CD8-positive, alpha-beta T cell (primary cell): ENCODE measurements at regions of chr12 and their contacts with region 1.

Region 1: DNA sequence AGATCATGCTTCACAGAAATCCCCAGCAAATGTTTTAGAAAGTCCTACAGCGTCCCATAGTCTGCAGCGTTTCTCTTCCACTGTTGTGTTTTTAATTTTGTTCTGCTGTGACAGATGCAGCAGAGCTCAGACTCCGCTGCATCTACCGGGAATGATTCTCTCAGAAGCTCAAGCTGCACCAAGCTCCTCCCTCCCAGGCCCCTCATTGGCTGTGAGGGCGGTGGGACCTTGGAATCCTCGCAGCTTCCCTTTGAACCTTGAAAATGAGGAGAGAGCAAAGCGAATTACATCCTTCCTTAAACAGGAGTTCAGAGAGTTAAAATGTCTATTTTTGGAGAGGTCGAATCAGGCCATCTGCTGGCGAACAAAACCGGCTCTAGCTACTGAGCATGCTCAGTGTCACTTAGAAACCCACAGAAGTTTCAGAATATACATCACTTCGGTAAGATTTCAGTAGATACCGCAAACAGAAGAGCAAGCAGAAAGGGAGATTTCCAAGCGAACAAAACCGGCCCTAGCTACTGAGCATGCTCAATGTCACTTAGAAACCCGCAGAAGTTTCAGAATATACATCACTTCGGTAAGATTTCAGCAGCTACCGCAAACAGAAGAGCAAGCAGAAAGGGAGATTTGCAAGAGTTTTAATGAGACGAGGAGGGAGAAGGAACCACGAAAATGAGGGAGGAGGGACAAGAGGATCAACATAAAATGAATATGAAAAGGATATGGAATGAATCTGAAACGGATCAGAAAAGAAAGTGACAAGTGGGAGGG is at the start of gene ABCD2:
- DNase-seq: peak; percentile 41 to 95 (median 73)
- ATAC-seq: peak; percentile 80
- H3K4me3 ChIP-seq: peak within 1 kb of the TSS; percentile 62 to 73
- H3K4me3 Mint-ChIP-seq: no peak within 1 kb of the TSS
- H3K27ac ChIP-seq: peak within 1 kb of the TSS; percentile 71 to 81
- H3K27ac Mint-ChIP-seq: no peak within 1 kb of the TSS
- H3K4me1 ChIP-seq: peaks cover 33% of the 10 kb centered on the region
- H3K4me1 Mint-ChIP-seq: peaks cover 42% of the 10 kb centered on the region
- H3K27me3 ChIP-seq: no peaks in the 10 kb centered on the region
- H3K27me3 Mint-ChIP-seq: no peaks in the 10 kb centered on the region
- CTCF ChIP-seq: peak; percentile 17
- total RNA-seq, gene ABCD2: 3.4 to 3.5 TPM

Region 2: GRCh38 chr12:38316391-38317129 is 1303.3 kb before region 1 on chr12 and contains the start of gene ALG10B:
- CTCF ChIA-PET with region 1: no interaction called
- POLR2A ChIA-PET with region 1: no interaction called
- intact Hi-C with region 1: loop called in 1 of 2 experiments (anchors 5 kb)
- DNase-seq: peak; percentile 85 to 97 (median 91)
- ATAC-seq: peak; percentile 95
- H3K4me3 ChIP-seq: peak within 1 kb of the TSS; percentile 69 to 74
- H3K4me3 Mint-ChIP-seq: peak within 1 kb of the TSS; percentile 88
- H3K27ac ChIP-seq: peak within 1 kb of the TSS; percentile 85 to 92
- H3K27ac Mint-ChIP-seq: peak within 1 kb of the TSS; percentile 97
- H3K4me1 ChIP-seq: peaks cover 26% of the 10 kb centered on the region
- H3K4me1 Mint-ChIP-seq: peaks cover 27% of the 10 kb centered on the region
- H3K27me3 ChIP-seq: no peaks in the 10 kb centered on the region
- H3K27me3 Mint-ChIP-seq: no peaks in the 10 kb centered on the region
- CTCF ChIP-seq: peak; percentile 70
- total RNA-seq, gene ALG10B: 7.2 to 10.3 TPM

Region 3: GRCh38 chr12:39587225-39587624 is 32.6 kb before region 1 on chr12:
- CTCF ChIA-PET with region 1: interaction called, 8 read pairs
- POLR2A ChIA-PET with region 1: interaction called, 3 read pairs
- intact Hi-C with region 1: loop called in 1 of 2 experiments (anchors 2 kb)
- DNase-seq: peak in 5 of 9 experiments; percentile 1 to 67 (median 19)
- ATAC-seq: peak; percentile 75
- H3K4me3 ChIP-seq: no peak overlapping the region
- H3K4me3 Mint-ChIP-seq: no peak overlapping the region
- H3K27ac ChIP-seq: no peak overlapping the region
- H3K27ac Mint-ChIP-seq: no peak overlapping the region
- H3K4me1 ChIP-seq: no peaks in the 10 kb centered on the region
- H3K4me1 Mint-ChIP-seq: peaks cover 14% of the 10 kb centered on the region
- H3K27me3 ChIP-seq: no peaks in the 10 kb centered on the region
- H3K27me3 Mint-ChIP-seq: no peaks in the 10 kb centered on the region
- CTCF ChIP-seq: peak; percentile 53

Region 4: DNA sequence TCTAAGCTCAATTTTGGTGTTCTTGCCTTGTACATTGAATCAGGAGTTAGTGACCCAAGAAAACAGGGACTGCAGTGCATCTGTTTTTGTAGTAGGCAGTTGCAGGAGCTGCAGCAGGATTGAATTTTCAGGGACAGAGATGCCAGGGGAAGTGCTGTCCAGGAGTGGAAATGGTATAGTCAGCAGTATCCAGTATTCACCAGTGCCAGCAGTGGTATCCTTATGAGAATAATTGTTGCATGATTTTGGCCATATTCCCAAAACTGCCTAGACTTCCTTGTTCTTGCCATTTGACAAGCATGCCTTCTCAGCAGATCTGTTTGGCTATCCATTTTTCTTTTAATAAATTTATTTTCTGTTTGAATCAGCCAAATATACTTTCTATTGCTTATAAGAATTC is 18.3 kb after region 1 on chr12:
- CTCF ChIA-PET with region 1: interaction called, 4 read pairs
- POLR2A ChIA-PET with region 1: interaction called, 4 read pairs
- intact Hi-C with region 1: loop called in 1 of 2 experiments (anchors 2 kb)
- DNase-seq: no peak
- ATAC-seq: no peak
- H3K4me3 ChIP-seq: no peak overlapping the region
- H3K4me3 Mint-ChIP-seq: no peak overlapping the region
- H3K27ac ChIP-seq: no peak overlapping the region
- H3K27ac Mint-ChIP-seq: no peak overlapping the region
- H3K4me1 ChIP-seq: no peaks in the 10 kb centered on the region
- H3K4me1 Mint-ChIP-seq: no peaks in the 10 kb centered on the region
- H3K27me3 ChIP-seq: no peaks in the 10 kb centered on the region
- H3K27me3 Mint-ChIP-seq: no peaks in the 10 kb centered on the region
- CTCF ChIP-seq: no peak

Region 5: DNA sequence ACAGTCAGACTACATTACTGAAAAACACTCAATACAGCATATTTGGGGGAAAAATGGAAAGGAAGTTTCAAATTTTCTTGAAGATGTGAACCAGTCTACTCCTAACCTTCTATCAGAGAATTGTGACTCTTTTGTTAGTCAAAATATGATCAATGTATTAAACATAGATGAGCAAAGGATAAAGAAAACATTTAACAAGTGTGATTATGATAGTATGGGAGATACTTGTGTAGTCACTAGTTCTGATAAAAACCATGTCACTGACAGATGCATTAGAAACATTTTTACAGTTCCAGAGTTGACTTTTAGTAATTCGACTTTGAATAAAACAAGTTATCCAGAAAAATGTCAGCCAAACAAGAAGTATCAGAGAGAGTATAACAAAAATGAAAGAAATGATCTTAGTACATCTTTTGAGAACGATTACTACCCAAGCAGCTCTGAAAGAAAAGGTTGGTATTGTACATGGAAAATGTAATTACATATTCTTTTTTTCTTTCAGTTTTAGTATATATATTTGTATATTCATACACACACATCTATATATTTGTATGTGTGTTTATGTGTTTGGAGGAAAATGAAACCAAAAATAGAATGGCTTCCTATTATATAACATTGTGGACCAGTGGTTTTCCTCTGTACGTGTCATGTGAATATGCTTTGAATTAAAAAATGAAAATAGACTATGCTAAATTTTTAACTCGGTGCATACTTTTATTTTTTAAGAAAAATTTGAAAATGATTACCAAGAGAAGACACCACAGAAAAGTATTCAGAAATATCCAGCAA is 63.0 kb after region 1 on chr12:
- CTCF ChIA-PET with region 1: interaction called, 8 read pairs
- POLR2A ChIA-PET with region 1: interaction called, 18 read pairs
- intact Hi-C with region 1: loop called (anchors 1 to 5 kb)
- DNase-seq: peak in 2 of 9 experiments; percentile 52 to 75
- ATAC-seq: peak; percentile 88
- H3K4me3 ChIP-seq: peak overlapping the region; percentile 24 to 44
- H3K4me3 Mint-ChIP-seq: peak overlapping the region; percentile 88
- H3K27ac ChIP-seq: peak overlapping the region; percentile 57 to 86
- H3K27ac Mint-ChIP-seq: peak overlapping the region; percentile 98
- H3K4me1 ChIP-seq: peaks cover 23% of the 10 kb centered on the region
- H3K4me1 Mint-ChIP-seq: peaks cover 29% of the 10 kb centered on the region
- H3K27me3 ChIP-seq: no peaks in the 10 kb centered on the region
- H3K27me3 Mint-ChIP-seq: no peaks in the 10 kb centered on the region
- CTCF ChIP-seq: no peak